ENCODE measurements at regions of chr6 and their contacts with region 1.

Region 1: DNA sequence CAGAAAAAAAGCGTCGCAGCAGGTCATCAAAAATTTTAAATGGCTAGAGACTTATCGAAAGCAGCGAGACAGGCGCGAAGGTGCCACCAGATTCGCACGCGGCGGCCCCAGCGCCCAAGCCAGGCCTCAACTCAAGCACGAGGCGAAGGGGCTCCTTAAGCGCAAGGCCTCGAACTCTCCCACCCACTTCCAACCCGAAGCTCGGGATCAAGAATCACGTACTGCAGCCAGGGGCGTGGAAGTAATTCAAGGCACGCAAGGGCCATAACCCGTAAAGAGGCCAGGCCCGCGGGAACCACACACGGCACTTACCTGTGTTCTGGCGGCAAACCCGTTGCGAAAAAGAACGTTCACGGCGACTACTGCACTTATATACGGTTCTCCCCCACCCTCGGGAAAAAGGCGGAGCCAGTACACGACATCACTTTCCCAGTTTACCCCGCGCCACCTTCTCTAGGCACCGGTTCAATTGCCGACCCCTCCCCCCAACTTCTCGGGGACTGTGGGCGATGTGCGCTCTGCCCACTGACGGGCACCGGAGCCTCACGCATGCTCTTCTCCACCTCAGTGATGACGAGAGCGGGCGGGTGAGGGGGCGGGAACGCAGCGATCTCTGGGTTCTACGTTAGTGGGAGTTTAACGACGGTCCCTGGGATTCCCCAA is at the start of gene EEF1A1:
- DNase-seq: peak; percentile 98 to 100 (median 99)
- ATAC-seq: peak; percentile 81
- H3K4me3 ChIP-seq: peak within 1 kb of the TSS; percentile 90
- H3K4me3 Mint-ChIP-seq: peak within 1 kb of the TSS; percentile 94
- H3K27ac ChIP-seq: peak within 1 kb of the TSS; percentile 99
- H3K27ac Mint-ChIP-seq: peak within 1 kb of the TSS; percentile 97
- H3K4me1 ChIP-seq: peaks cover 64% of the 10 kb centered on the region
- H3K4me1 Mint-ChIP-seq: peaks cover 74% of the 10 kb centered on the region
- H3K27me3 ChIP-seq: no peaks in the 10 kb centered on the region
- H3K27me3 Mint-ChIP-seq: no peaks in the 10 kb centered on the region
- CTCF ChIP-seq: no peak
- total RNA-seq, gene EEF1A1: 15,669 to 16,465 TPM

Region 2: DNA sequence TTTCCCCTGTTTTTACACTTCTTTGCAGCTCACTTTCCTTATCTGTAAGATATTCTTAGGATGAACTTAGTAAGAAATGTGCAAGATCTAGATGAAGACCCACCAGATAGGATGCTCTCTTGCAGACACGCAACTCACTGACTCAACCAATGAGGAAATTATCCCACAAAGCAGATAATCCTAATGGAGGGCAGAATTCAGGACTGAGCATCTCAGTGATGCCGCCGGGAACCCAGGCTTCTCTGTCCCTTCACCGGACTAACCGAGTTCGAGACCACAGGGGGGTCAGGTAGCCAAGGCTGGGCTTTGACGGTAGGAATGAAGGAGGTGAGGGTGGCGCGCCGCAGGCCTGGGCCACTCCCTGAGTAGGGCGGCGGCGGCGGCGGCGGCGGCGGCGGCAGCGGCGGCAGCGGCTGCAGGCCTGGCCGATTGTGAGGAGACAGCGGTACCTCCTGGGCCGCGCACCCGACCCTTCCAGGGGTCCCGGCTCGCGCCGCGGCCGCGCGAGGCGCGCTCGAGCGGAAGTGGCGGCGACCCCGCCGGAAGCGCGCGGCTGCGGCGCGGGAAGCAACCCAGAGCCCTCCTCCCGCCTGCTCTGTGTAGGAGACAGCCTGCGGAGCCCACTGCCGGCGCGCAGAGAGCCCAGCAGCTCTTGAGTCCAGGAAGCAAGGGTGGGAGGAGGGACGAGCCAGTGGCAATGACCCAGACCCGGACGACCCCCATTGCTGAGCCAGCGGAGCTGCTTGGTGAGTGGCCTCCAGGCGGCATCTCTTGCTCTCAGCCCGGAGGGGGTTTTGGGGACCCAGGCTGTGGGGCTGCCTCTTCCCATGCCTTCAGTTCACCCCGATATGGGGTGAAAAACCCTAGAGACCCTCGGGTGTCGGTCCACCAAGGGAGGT is 257.9 kb before region 1 on chr6 and contains the start of gene KHDC1:
- CTCF ChIA-PET with region 1: no interaction called
- POLR2A ChIA-PET with region 1: interaction called, 4 read pairs
- intact Hi-C with region 1: loop called in 1 of 2 experiments (anchors 5 kb)
- DNase-seq: peak; percentile 26 to 80 (median 52)
- ATAC-seq: peak; percentile 92
- H3K4me3 ChIP-seq: peak within 1 kb of the TSS; percentile 78
- H3K4me3 Mint-ChIP-seq: peak within 1 kb of the TSS; percentile 81
- H3K27ac ChIP-seq: peak within 1 kb of the TSS; percentile 26 to 38
- H3K27ac Mint-ChIP-seq: peak within 1 kb of the TSS; percentile 76
- H3K4me1 ChIP-seq: peaks cover 19% of the 10 kb centered on the region
- H3K4me1 Mint-ChIP-seq: peaks cover 35% of the 10 kb centered on the region
- H3K27me3 ChIP-seq: no peaks in the 10 kb centered on the region
- H3K27me3 Mint-ChIP-seq: no peaks in the 10 kb centered on the region
- CTCF ChIP-seq: no peak
- total RNA-seq, gene KHDC1: 0.71 to 1.2 TPM

Region 3: GRCh38 chr6:73508776-73509175 is 12.0 kb before region 1 on chr6:
- CTCF ChIA-PET with region 1: no interaction called
- POLR2A ChIA-PET with region 1: interaction called, 16 read pairs
- intact Hi-C with region 1: no loop called
- DNase-seq: no peak
- ATAC-seq: no peak
- H3K4me3 ChIP-seq: no peak overlapping the region
- H3K4me3 Mint-ChIP-seq: no peak overlapping the region
- H3K27ac ChIP-seq: no peak overlapping the region
- H3K27ac Mint-ChIP-seq: no peak overlapping the region
- H3K4me1 ChIP-seq: no peaks in the 10 kb centered on the region
- H3K4me1 Mint-ChIP-seq: peaks cover 5% of the 10 kb centered on the region
- H3K27me3 ChIP-seq: no peaks in the 10 kb centered on the region
- H3K27me3 Mint-ChIP-seq: no peaks in the 10 kb centered on the region
- CTCF ChIP-seq: no peak

Region 4: GRCh38 chr6:73580247-73581149 is 59.7 kb after region 1 on chr6:
- CTCF ChIA-PET with region 1: interaction called, 10 read pairs
- POLR2A ChIA-PET with region 1: interaction called, 137 read pairs
- intact Hi-C with region 1: loop called in 1 of 2 experiments (anchors 5 kb)
- DNase-seq: peak; percentile 18 to 84 (median 60)
- ATAC-seq: peak; percentile 76
- H3K4me3 ChIP-seq: peak overlapping the region; percentile 30
- H3K4me3 Mint-ChIP-seq: peak overlapping the region; percentile 54
- H3K27ac ChIP-seq: peak overlapping the region; percentile 48 to 82
- H3K27ac Mint-ChIP-seq: peak overlapping the region; percentile 85
- H3K4me1 ChIP-seq: peaks cover 29% of the 10 kb centered on the region
- H3K4me1 Mint-ChIP-seq: peaks cover 15% of the 10 kb centered on the region
- H3K27me3 ChIP-seq: no peaks in the 10 kb centered on the region
- H3K27me3 Mint-ChIP-seq: no peaks in the 10 kb centered on the region
- CTCF ChIP-seq: no peak

Region 5: DNA sequence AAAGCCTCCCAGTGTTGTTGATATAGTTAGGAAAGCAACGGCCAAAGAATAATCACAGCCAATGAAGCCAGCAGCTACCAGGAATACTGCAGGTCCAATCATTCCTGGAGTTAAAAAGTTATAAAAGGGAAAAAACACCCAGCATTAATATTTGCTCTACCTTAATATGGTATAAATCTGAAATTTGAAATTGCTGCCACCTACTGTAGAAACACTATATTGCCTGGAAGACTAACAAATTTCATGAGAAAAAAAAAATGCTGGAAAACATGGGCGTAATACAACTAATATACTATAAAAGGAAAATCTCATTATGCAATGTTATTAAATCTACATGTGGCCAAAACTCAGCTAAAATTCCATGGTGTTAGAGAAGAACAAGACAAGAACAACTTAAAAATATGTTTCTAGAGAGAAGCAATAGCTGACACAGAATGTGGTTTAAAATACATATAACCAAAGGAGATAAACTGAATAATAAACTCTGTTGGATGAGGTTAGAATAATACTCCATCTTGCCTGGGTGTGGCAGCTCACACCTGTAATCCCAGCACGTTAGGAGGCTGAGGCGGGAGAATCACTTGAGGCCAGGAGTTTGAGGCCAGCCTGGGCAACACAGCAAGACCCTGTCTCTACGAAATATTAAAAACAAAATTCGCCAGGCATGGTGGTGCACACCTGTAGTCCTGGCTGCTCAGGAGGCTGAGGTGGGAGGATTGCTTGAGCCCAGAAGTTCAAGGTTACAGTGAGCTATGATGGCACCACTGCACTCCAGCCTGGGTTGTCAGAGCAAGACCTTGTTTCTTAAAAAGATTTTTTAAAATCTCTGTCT is 89.8 kb after region 1 on chr6:
- CTCF ChIA-PET with region 1: interaction called, 50 read pairs
- POLR2A ChIA-PET with region 1: interaction called, 89 read pairs
- intact Hi-C with region 1: no loop called
- DNase-seq: peak in 3 of 14 experiments; percentile 71 to 74 (median 71)
- ATAC-seq: peak; percentile 78
- H3K4me3 ChIP-seq: no peak overlapping the region
- H3K4me3 Mint-ChIP-seq: no peak overlapping the region
- H3K27ac ChIP-seq: no peak overlapping the region
- H3K27ac Mint-ChIP-seq: no peak overlapping the region
- H3K4me1 ChIP-seq: no peaks in the 10 kb centered on the region
- H3K4me1 Mint-ChIP-seq: peaks cover 5% of the 10 kb centered on the region
- H3K27me3 ChIP-seq: no peaks in the 10 kb centered on the region
- H3K27me3 Mint-ChIP-seq: no peaks in the 10 kb centered on the region
- CTCF ChIP-seq: peak; percentile 74

Region 6: DNA sequence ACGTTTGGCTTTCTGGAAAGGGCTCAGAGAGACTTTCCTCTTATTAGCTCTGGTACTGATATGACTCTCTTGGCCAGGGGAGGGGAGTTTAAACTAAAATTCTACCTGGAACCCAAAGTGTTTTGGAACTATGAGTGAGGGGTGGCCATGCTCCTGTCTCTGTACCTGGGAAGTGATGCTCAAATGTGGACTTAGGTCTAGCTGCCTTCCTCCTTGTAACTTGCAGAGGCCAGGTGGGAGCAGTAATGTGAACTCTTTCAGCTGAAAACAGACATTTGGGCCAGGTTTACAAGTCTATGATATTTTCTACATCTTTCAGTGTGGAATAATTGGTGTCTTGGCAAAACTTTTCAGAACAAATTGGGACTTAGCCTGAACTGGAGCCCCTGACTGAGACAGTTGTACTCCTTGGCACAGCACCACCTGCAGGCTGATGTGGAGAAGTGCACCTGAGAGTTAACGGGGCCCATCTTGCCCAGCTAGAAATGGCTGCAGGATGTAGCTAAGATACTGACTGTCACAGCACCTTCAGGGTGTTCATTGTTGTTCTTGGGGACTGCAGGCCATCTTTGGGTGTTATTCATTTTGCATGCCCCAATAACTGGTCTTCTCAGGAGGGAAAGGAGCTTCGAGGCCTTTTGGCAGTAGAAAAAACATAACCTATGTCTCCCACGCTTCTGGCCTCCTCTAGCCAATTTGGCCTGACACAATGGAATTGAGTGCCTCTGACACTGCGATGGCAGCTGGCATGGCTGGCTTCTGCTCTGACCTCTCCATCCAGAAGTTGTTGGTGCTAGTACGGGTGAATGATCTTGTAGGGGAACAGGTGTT is 212.2 kb after region 1 on chr6:
- CTCF ChIA-PET with region 1: no interaction called
- POLR2A ChIA-PET with region 1: no interaction called
- intact Hi-C with region 1: loop called in 1 of 2 experiments (anchors 5 kb)
- DNase-seq: peak; percentile 48 to 84 (median 52)
- ATAC-seq: peak; percentile 100
- H3K4me3 ChIP-seq: no peak overlapping the region
- H3K4me3 Mint-ChIP-seq: no peak overlapping the region
- H3K27ac ChIP-seq: no peak overlapping the region
- H3K27ac Mint-ChIP-seq: no peak overlapping the region
- H3K4me1 ChIP-seq: no peaks in the 10 kb centered on the region
- H3K4me1 Mint-ChIP-seq: no peaks in the 10 kb centered on the region
- H3K27me3 ChIP-seq: no peaks in the 10 kb centered on the region
- H3K27me3 Mint-ChIP-seq: no peaks in the 10 kb centered on the region
- CTCF ChIP-seq: peak; percentile 81

Region 7: DNA sequence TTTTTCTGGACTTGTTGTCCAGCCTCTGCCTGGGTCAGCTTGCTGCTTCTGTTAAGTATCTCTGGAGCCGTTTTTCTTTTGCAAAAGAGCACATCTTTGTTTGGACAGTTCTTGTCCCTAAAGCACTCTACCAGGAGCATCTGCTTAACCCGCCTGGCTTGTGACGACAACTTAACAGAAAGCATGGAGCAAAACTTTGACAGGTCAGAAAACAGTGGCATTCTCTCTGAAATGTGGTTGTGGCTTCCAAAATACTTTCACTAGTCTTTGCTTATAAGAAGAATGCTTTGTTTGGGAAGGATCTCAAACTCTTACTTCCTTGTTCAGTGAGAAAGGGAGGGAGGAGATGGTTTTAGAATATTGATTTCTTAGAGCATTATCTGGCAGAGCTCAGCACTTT is 222.7 kb after region 1 on chr6:
- CTCF ChIA-PET with region 1: no interaction called
- POLR2A ChIA-PET with region 1: no interaction called
- intact Hi-C with region 1: no loop called
- DNase-seq: no peak
- ATAC-seq: no peak
- H3K4me3 ChIP-seq: no peak overlapping the region
- H3K4me3 Mint-ChIP-seq: no peak overlapping the region
- H3K27ac ChIP-seq: no peak overlapping the region
- H3K27ac Mint-ChIP-seq: no peak overlapping the region
- H3K4me1 ChIP-seq: no peaks in the 10 kb centered on the region
- H3K4me1 Mint-ChIP-seq: no peaks in the 10 kb centered on the region
- H3K27me3 ChIP-seq: no peaks in the 10 kb centered on the region
- H3K27me3 Mint-ChIP-seq: no peaks in the 10 kb centered on the region
- CTCF ChIP-seq: no peak